K562 (cell line): ENCODE measurements at regions of chr4 and their contacts with region 1.

Region 1: DNA sequence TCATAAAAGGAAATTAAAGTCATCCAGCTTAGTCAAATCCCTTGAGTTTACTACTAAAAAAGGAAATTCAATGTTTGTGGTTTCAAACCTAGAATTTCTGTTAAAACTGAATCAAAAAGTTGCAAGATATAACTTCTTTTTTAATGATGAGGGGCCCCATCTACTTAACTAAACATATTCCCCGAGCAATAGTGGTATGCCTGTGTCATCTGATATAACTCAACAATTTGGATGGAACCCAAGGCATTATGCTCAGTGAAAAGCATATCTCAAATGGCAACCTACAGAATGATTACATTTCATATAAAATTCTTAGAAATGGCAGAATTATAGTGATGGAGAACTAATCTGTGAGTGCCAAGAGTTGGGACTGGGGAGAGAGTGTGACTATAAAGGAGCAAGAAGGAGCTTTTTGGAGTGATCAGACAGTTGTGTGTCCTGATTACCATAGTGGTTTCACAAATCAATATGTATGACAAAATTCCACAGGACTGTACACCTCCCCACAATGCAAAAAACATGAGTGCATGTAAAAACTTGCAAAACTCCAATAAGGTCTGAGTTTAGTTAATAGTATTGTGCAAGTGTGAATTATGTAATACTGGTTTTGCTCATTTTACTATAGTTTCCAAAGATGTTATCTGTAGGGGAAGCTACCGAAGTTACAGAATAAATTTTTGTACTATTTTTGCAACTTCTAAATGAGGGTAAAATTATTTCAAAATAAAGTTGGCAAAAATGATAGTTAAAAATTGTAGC is 323.2 kb downstream of the ARHGAP24 start:
- DNase-seq: no peak
- ATAC-seq: no peak
- H3K4me3 ChIP-seq: no peak overlapping the region
- H3K27ac ChIP-seq: no peak overlapping the region
- H3K4me1 ChIP-seq: no peaks in the 10 kb centered on the region
- H3K27me3 ChIP-seq: no peaks in the 10 kb centered on the region
- CTCF ChIP-seq: no peak
- EP300 ChIP-seq: no peak
- POLR2A ChIP-seq: no peak
- RAD21 ChIP-seq: no peak

Region 2: GRCh38 chr4:85968945-85969819 is 171.0 kb after region 1 on chr4:
- CTCF ChIA-PET with region 1: interaction called, 7 read pairs
- POLR2A ChIA-PET with region 1: no interaction called
- in situ Hi-C with region 1: no loop called
- intact Hi-C with region 1: loop called (anchors 1 kb)
- DNase-seq: peak in 3 of 4 experiments; percentile 10 to 33 (median 21)
- ATAC-seq: peak; percentile 55; the same call in 2 of the 3 replicates
- H3K4me3 ChIP-seq: no peak overlapping the region
- H3K27ac ChIP-seq: no peak overlapping the region
- H3K4me1 ChIP-seq: no peaks in the 10 kb centered on the region
- H3K27me3 ChIP-seq: no peaks in the 10 kb centered on the region
- CTCF ChIP-seq: peak; percentile 35 to 63 (median 38); a peak in 4 of 6 replicates
- EP300 ChIP-seq: no peak
- POLR2A ChIP-seq: no peak
- RAD21 ChIP-seq: peak; percentile 64 to 72

Region 3: GRCh38 chr4:86223472-86223871 is 425.3 kb after region 1 on chr4:
- CTCF ChIA-PET with region 1: no interaction called
- POLR2A ChIA-PET with region 1: no interaction called
- in situ Hi-C with region 1: no loop called
- intact Hi-C with region 1: loop called (anchors 5 kb)
- DNase-seq: peak; percentile 24 to 62 (median 33)
- ATAC-seq: peak; percentile 95
- H3K4me3 ChIP-seq: no peak overlapping the region
- H3K27ac ChIP-seq: no peak overlapping the region
- H3K4me1 ChIP-seq: no peaks in the 10 kb centered on the region
- H3K27me3 ChIP-seq: no peaks in the 10 kb centered on the region
- CTCF ChIP-seq: peak; percentile 69 to 94 (median 80)
- EP300 ChIP-seq: no peak
- POLR2A ChIP-seq: no peak
- RAD21 ChIP-seq: peak in 1 of 2 experiments; percentile 59; a peak in 2 of 4 replicates